Naive thymus-derived CD4-positive, alpha-beta T cell (primary cell): ENCODE measurements at regions of chr13 and their contacts with region 1.

Region 1: DNA sequence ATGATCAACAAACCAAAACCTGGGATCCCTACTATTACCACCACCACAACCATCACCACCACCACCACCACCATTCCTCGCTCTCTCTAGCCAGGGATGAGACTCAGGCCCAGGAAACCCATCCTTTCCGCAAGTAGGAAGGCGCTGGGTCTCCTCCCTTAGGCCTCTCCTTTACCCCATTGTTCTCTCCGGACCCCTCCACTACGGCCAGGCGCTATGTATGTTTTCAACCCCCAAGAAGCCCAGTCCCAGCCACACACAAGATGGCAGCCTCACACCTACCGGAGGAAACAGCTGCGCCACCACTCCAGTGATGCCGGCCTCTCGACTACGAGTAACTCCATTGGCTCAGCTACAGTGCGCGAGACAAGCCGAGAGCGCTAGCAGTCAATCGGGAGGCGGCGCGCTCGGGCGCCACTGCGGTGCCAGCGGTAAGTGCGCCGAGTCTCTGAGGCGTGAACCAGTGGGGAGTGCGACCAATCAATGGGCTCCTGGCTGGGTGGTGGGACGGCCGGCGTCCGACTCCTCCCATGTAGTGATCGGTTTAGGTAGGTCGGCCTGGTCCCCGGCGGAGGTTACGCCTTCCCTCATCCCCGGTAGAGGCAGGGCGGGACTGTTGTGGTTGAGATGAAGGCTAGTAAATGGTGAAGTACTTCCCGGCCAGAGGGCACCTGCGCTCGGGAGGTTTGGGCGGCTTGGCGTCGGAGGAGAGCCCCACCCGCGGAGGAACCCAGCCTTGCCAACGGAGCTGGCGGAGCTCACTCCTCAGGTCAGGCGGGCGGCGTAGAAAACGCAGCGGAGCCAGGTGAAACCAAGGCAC is at the starts of genes CAB39L and SETDB2:
- DNase-seq: peak; percentile 91 to 100 (median 99)
- ATAC-seq: peak; percentile 95
- H3K4me3 ChIP-seq: peak within 1 kb of the TSS; percentile 92
- H3K4me3 Mint-ChIP-seq: peak within 1 kb of the TSS; percentile 91 to 97 (median 95)
- H3K27ac ChIP-seq: peak within 1 kb of the TSS; percentile 83
- H3K27ac Mint-ChIP-seq: peak within 1 kb of the TSS; percentile 95 to 99 (median 97)
- H3K4me1 ChIP-seq: peaks cover 22 to 35% of the 10 kb centered on the region in 2 donors
- H3K4me1 Mint-ChIP-seq: peaks cover 30 to 58% (median 53%) of the 10 kb centered on the region in 7 donors
- H3K27me3 ChIP-seq: no peaks in the 10 kb centered on the region
- H3K27me3 Mint-ChIP-seq: no peaks in the 10 kb centered on the region
- total RNA-seq, gene CAB39L: 2.9 to 5.9 (median 4.6) TPM
- total RNA-seq, gene SETDB2: 16.7 to 30.0 (median 20.3) TPM

Region 2: DNA sequence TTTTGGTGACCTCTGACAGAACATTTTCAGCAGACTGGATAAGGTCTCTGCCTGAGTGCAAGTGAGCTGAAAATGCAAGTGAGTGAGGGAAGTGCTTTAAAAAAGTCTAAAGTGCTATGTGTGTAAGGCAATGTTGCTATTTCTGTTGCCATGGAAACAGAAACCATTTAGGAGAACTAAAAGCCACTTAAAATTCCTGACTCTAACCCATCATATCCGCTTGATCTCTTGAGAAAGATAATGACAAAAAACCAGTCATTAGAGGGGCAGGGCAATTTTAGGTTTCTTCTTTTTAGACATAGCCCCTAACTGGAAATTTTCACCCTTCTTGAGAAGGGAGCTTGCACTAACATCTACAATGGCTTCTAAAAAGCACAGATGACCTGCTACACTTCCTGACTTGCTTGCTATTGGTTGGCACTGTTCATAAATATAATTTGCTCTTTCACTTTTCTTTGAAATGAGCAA is 790.4 kb before region 1 on chr13 and contains the start of gene CYSLTR2:
- CTCF ChIA-PET with region 1: no interaction called
- POLR2A ChIA-PET with region 1: no interaction called
- intact Hi-C with region 1: loop called in 1 of 2 experiments (anchors 10 kb)
- DNase-seq: peak in 7 of 9 donors; percentile 63 to 89 (median 81)
- ATAC-seq: peak; percentile 89
- H3K4me3 ChIP-seq: peak within 1 kb of the TSS; percentile 49
- H3K4me3 Mint-ChIP-seq: peak within 1 kb of the TSS; percentile 77 to 98 (median 86)
- H3K27ac ChIP-seq: peak within 1 kb of the TSS; percentile 82
- H3K27ac Mint-ChIP-seq: peak within 1 kb of the TSS; percentile 86 to 99 (median 94)
- H3K4me1 ChIP-seq: peaks cover 11 to 26% of the 10 kb centered on the region in 2 donors
- H3K4me1 Mint-ChIP-seq: peaks cover 22 to 65% (median 56%) of the 10 kb centered on the region in 7 donors
- H3K27me3 ChIP-seq: no peaks in the 10 kb centered on the region
- H3K27me3 Mint-ChIP-seq: peaks cover 0 to 2% (median 0%) of the 10 kb centered on the region in 5 donors
- total RNA-seq, gene CYSLTR2: 2.1 to 6.5 (median 3.5) TPM

Region 3: DNA sequence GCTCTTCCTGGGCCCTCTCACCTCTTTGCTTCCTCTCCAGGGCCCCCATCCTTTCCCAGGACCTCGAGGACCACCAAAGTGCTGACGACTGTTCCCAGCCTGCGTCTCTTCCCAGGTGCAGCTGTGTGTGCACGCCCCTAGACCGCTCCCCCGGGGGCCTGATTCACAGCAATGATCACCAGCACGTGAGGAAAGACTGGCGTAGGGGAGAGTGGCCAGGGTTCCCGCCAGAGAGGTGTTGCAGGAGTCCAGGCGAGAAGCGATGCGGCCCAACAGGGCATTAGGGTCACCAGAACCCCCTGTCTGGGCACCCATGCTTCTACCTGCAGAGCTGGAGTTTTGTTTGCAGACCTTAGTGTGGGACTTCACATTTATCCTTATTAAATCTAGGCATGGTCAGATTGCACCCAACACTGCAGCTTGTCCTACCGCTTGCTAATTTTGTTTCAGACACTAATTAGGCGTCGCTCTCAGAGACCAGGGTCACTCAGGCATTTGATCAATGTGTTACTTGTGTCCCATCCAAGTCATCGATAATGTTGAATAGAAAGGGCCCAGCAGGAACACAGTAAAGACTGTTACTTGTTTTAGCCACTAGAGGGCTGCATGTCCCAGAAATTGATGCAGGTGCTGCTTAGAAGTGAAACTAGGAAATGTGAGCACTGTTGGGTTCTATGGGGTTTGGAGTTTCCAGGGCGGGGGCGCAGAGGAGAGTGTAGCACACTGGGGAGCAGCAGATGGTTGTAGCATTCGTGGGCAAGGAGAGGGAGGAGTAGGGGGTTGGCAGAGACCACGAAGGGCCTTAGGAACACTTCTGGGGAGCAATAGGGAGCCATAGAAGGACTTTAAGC is 142.9 kb before region 1 on chr13:
- CTCF ChIA-PET with region 1: no interaction called
- POLR2A ChIA-PET with region 1: no interaction called
- intact Hi-C with region 1: loop called (anchors 1 kb)
- DNase-seq: peak in 8 of 9 donors; percentile 67 to 82 (median 75)
- ATAC-seq: peak; percentile 96
- H3K4me3 ChIP-seq: peak overlapping the region; percentile 67
- H3K4me3 Mint-ChIP-seq: peak overlapping the region; percentile 63 to 90 (median 80)
- H3K27ac ChIP-seq: no peak overlapping the region
- H3K27ac Mint-ChIP-seq: peak overlapping the region; percentile 16 to 82 (median 71)
- H3K4me1 ChIP-seq: no peaks in the 10 kb centered on the region
- H3K4me1 Mint-ChIP-seq: peaks cover 8 to 28% (median 14%) of the 10 kb centered on the region in 7 donors
- H3K27me3 ChIP-seq: no peaks in the 10 kb centered on the region
- H3K27me3 Mint-ChIP-seq: no peaks in the 10 kb centered on the region

Region 4: GRCh38 chr13:49495783-49496762 is 52.2 kb after region 1 on chr13 and contains the start of gene PHF11:
- CTCF ChIA-PET with region 1: interaction called, 3 read pairs
- POLR2A ChIA-PET with region 1: interaction called, 85 read pairs
- intact Hi-C with region 1: loop called (anchors 1 kb)
- DNase-seq: peak; percentile 66 to 86 (median 83)
- ATAC-seq: peak; percentile 90
- H3K4me3 ChIP-seq: peak within 1 kb of the TSS; percentile 77
- H3K4me3 Mint-ChIP-seq: peak within 1 kb of the TSS; percentile 91 to 99 (median 97)
- H3K27ac ChIP-seq: peak within 1 kb of the TSS; percentile 90
- H3K27ac Mint-ChIP-seq: peak within 1 kb of the TSS; percentile 81 to 100 (median 99)
- H3K4me1 ChIP-seq: peaks cover 25 to 34% of the 10 kb centered on the region in 2 donors
- H3K4me1 Mint-ChIP-seq: peaks cover 34 to 59% (median 53%) of the 10 kb centered on the region in 7 donors
- H3K27me3 ChIP-seq: no peaks in the 10 kb centered on the region
- H3K27me3 Mint-ChIP-seq: no peaks in the 10 kb centered on the region
- total RNA-seq, gene PHF11: 96.0 to 132 (median 126) TPM

Region 5: DNA sequence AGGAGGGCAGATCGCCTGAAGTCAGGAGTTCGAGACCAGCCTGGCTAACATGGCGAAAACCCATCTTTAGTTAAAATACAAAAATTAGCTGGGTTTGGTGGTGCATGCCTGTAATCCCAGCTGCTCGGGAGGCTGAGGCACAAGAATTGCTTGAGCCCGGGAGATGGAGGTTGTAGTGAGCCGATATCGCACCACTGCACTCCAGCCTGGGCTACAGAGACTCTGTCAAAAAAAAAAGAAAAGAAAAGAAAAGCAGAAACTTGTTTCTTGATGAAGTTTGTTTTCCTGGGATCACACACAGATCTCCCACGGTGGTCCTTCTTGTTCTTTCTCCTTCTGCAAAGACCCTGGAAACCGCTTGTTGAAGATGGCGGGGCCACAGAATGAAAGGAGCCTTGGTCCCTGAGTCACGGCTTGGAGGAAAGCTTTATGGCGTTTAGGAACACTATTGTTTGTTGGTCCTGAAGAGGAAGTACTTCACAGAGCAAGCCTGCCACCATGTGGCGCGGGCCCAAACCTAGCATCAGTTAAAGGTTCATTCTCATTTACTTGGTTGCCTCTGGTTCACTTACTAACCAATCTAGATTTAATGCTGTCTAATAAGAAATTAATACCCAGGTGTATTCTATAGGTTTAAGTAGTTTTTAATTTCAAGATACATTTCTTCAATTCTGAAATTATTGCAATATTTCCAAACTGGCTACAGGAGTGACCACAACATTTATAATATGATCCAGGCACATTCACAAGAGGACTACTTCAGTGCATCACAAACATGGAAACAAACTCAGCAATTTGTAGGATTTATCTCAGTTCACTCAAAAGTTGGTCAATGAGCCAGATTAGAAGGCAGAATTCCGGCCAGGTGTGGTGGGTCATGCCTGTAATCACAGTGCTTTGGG is 163.1 kb after region 1 on chr13:
- CTCF ChIA-PET with region 1: interaction called, 3 read pairs
- POLR2A ChIA-PET with region 1: interaction called, 3 read pairs
- intact Hi-C with region 1: loop called (anchors 1 kb)
- DNase-seq: peak; percentile 57 to 80 (median 72)
- ATAC-seq: peak; percentile 98
- H3K4me3 ChIP-seq: peak overlapping the region; percentile 49
- H3K4me3 Mint-ChIP-seq: peak overlapping the region; percentile 62 to 92 (median 87)
- H3K27ac ChIP-seq: no peak overlapping the region
- H3K27ac Mint-ChIP-seq: peak overlapping the region in 8 of 9 donors; percentile 43 to 91 (median 75)
- H3K4me1 ChIP-seq: no peaks in the 10 kb centered on the region
- H3K4me1 Mint-ChIP-seq: peaks cover 0 to 7% (median 4%) of the 10 kb centered on the region in 7 donors
- H3K27me3 ChIP-seq: no peaks in the 10 kb centered on the region
- H3K27me3 Mint-ChIP-seq: peaks cover 0 to 5% (median 0%) of the 10 kb centered on the region in 5 donors

Region 6: DNA sequence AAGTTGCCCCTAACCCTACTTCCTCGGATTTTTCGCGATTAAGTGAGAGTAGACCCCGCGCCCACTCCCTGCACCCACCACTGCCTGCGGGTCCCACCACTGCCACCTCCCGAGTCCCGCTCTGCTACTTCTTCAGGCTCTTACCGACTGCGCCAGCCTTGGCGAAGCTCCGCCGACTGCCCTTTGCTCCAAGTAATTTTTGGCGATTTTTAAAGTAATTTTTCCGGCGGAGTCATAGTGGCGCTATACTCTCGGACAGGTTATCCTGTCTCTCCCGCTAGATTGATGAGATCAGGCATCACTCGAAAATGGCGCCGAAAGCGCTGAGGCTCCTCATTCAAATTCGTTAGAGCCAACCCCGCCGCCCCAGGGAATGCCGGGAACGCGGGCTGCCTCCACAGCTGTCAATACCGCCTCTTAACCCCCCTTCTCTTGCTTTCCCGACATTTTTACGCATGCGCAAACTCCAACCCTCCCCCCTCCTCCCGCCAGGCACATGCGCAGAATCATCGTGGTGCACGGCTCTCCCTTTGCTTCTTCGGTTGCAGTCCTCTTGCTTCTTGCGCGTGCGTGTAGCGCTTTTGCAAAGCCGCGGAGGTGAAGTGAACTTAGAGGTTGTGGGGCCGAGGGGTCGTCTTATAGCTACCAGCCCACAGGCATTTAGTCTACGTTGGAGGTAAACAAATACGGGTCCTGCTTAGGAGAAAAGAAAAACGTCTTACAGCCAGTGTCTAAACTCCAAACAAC is 637.9 kb after region 1 on chr13:
- CTCF ChIA-PET with region 1: no interaction called
- POLR2A ChIA-PET with region 1: no interaction called
- intact Hi-C with region 1: loop called (anchors 5 kb)
- DNase-seq: peak; percentile 94 to 99 (median 99)
- ATAC-seq: peak; percentile 88
- H3K4me3 ChIP-seq: peak overlapping the region; percentile 63
- H3K4me3 Mint-ChIP-seq: peak overlapping the region; percentile 90 to 100 (median 95)
- H3K27ac ChIP-seq: peak overlapping the region; percentile 86
- H3K27ac Mint-ChIP-seq: peak overlapping the region; percentile 88 to 99 (median 94)
- H3K4me1 ChIP-seq: peaks cover 17% of the 10 kb centered on the region in 2 donors
- H3K4me1 Mint-ChIP-seq: peaks cover 13 to 63% (median 49%) of the 10 kb centered on the region in 7 donors
- H3K27me3 ChIP-seq: peaks cover 0 to 8% of the 10 kb centered on the region in 2 donors
- H3K27me3 Mint-ChIP-seq: peaks cover 0 to 11% (median 7%) of the 10 kb centered on the region in 5 donors